ENCODE measurements at regions of chr16 and their contacts with region 1.

Region 1: GRCh38 chr16:20874088-20874581 is 26.0 kb downstream of the DCUN1D3 start:
- DNase-seq: no peak
- H3K4me3 ChIP-seq: peak overlapping the region; percentile 39
- H3K27ac ChIP-seq: peak overlapping the region; percentile 69
- H3K4me1 ChIP-seq: peaks cover 24% of the 10 kb centered on the region
- CTCF ChIP-seq: no peak

Region 2: GRCh38 chr16:20741554-20742285 is 132.4 kb before region 1 on chr16 and contains the start of gene THUMPD1:
- CTCF ChIA-PET with region 1: interaction called, 10 read pairs
- POLR2A ChIA-PET with region 1: no interaction called
- intact Hi-C with region 1: no loop called
- DNase-seq: peak; percentile 96
- H3K4me3 ChIP-seq: peak within 1 kb of the TSS; percentile 92
- H3K27ac ChIP-seq: peak within 1 kb of the TSS; percentile 75
- H3K4me1 ChIP-seq: peaks cover 13% of the 10 kb centered on the region
- CTCF ChIP-seq: peak; percentile 40
- total RNA-seq, gene THUMPD1: 45.4 and 48.2 TPM in 2 replicates

Region 3: GRCh38 chr16:20774703-20775362 is 99.3 kb before region 1 on chr16:
- CTCF ChIA-PET with region 1: no interaction called
- POLR2A ChIA-PET with region 1: no interaction called
- intact Hi-C with region 1: no loop called
- DNase-seq: peak; percentile 67
- H3K4me3 ChIP-seq: no peak overlapping the region
- H3K27ac ChIP-seq: no peak overlapping the region
- H3K4me1 ChIP-seq: no peaks in the 10 kb centered on the region
- CTCF ChIP-seq: peak; percentile 83

Region 4: DNA sequence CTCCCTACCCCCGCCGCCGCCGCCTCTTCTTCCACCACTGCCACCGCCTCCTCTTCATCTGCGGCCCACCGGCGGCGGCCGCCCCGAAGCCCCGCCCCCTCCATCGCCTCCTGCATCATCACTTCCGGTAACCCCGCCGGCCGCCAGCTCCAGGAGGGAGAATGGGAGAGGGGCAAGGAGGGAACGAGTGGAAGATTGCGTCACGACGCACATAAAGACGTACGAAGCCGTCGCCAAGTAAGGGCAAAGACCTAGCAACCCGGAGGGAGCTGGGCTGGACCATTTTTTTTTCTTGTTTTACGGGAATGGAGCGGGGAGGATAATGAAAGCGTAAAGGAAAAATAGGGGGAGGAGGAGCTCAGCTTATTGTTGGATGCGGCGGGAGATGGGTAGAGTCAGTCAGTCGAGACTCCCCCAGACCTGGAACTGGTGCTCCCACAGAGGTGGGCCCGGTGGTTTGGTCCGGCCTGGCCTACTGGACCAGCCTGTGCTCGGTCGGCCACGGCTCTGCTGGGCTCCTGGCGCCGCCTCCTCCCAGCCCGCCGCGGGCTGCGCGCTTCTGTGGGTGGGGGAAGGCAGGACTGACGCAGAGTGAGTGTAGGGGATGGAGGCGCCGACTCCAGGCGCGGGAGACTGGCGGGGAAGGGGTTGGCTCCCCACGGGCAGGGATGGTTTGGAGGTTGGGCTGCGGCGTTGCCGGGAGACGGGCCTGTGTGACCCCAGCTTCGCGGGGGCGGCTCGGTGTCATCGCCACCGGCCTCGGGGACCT is 26.3 kb after region 1 on chr16 and contains the starts of genes DCUN1D3 and LYRM1:
- CTCF ChIA-PET with region 1: no interaction called
- POLR2A ChIA-PET with region 1: interaction called, 5 read pairs
- intact Hi-C with region 1: loop called (anchors 2 kb)
- DNase-seq: peak; percentile 95
- H3K4me3 ChIP-seq: peak within 1 kb of the TSS; percentile 75
- H3K27ac ChIP-seq: peak within 1 kb of the TSS; percentile 56
- H3K4me1 ChIP-seq: peaks cover 50% of the 10 kb centered on the region
- CTCF ChIP-seq: no peak
- total RNA-seq, gene DCUN1D3: 3.1 and 3.3 TPM in 2 replicates
- total RNA-seq, gene LYRM1: 24.0 and 24.3 TPM in 2 replicates

Region 5: DNA sequence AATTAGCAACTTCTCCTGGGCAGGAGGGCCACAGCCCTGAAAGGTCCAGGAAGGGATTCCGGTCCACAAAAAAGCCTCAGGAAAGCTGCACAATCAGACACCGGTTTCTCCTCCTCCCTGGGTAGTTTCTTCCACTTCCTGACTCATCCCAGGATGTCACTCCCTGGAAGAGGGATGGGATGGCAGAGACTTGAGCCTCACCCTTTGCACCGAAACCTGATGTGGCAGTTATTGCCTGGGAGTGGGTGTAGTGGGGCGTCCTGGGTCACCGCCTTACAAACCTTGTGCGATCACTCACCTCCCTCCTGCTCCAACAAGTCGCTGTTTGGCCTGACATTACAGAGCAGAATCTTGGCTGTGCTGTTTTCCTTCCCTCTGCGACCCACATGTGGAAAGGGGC is 97.3 kb after region 1 on chr16:
- CTCF ChIA-PET with region 1: no interaction called
- POLR2A ChIA-PET with region 1: no interaction called
- intact Hi-C with region 1: no loop called
- DNase-seq: no peak
- H3K4me3 ChIP-seq: no peak overlapping the region
- H3K27ac ChIP-seq: no peak overlapping the region
- H3K4me1 ChIP-seq: no peaks in the 10 kb centered on the region
- CTCF ChIP-seq: no peak

Measured in OCI-LY7 (cell line).